Breast epithelium (tissue), 4 donors: ENCODE measurements at regions of chr4 and their contacts with region 1.

Region 1: DNA sequence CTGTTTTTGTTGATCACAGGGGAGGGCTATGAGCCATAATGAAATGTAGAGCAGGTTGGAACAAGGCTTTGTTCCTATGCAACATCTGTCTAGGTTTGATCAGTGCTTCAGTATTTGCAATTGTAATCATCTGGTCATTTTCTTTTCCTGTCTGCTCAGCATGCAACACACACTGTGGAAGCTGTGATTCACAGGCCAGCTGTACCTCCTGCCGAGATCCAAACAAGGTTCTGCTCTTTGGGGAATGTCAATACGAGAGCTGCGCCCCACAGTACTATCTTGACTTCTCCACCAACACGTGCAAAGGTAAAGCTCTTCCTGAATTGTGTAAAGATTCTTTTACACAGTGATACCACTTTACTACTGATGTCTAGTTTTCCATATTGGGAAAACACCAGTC is 181.9 kb upstream of the ANXA3 start:
- DNase-seq: no peak
- H3K4me3 ChIP-seq: no peak overlapping the region
- H3K27ac ChIP-seq: no peak overlapping the region
- H3K4me1 ChIP-seq: peaks cover 0 to 6% of the 10 kb centered on the region in 2 donors
- H3K27me3 ChIP-seq: no peaks in the 10 kb centered on the region
- CTCF ChIP-seq: no peak
- POLR2A ChIP-seq: no peak

Region 2: GRCh38 chr4:78268597-78268996 is 101.1 kb before region 1 on chr4:
- intact Hi-C with region 1: loop called (anchors 10 kb)
- DNase-seq: no peak
- H3K4me3 ChIP-seq: no peak overlapping the region
- H3K27ac ChIP-seq: no peak overlapping the region
- H3K4me1 ChIP-seq: no peaks in the 10 kb centered on the region
- H3K27me3 ChIP-seq: no peaks in the 10 kb centered on the region
- CTCF ChIP-seq: no peak
- POLR2A ChIP-seq: no peak

Region 3: GRCh38 chr4:79107014-79107413 is 737.3 kb after region 1 on chr4:
- intact Hi-C with region 1: no loop called
- DNase-seq: no peak
- H3K4me3 ChIP-seq: no peak overlapping the region
- H3K27ac ChIP-seq: no peak overlapping the region
- H3K4me1 ChIP-seq: no peaks in the 10 kb centered on the region
- H3K27me3 ChIP-seq: no peaks in the 10 kb centered on the region
- CTCF ChIP-seq: no peak
- POLR2A ChIP-seq: no peak